ENCODE measurements at regions of chr10 and their contacts with region 1.

Region 1: DNA sequence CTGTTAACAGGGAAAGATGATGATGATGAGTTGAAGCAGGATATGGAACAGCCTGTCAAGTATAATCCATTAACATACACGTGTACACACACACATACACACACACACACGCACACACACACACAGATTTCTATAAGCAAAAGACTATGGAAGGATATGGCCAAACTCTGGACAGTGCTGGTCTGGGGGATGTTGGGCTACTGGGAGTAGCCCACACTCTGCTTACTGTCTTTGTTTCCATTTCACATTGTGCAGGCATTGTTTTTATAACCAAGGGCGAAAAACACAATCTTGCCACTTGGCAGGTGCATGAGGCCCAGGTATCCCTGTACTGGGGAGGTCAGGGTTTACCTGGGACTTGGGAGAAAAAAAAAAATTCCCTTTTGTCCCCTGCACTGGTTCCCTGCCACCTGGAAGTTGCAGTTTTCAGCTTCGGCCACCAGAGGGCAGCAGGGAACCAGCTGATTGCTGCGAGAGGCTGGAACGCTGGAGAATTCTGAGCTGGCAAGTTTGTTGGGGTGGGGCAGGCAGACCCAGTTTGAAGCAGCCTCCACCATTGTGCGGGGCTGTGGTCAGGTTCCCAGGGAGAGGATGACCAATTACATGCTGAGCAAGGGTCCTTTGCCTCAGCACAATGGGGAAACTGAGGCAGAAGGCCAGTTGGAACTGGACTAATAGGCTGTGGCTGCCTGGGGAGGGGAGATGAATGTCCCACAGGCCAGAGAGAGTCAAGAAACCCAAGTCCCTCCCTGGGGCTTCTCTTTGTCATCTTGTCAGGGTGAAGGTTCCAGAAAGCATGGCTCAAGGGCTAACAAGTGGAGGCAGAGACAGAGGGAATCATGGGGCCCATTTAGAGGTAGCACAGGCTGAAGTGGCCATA is 27.3 kb downstream of the PPIF start:
- DNase-seq: peak; percentile 66 to 89 (median 80)
- H3K4me3 ChIP-seq: no peak overlapping the region
- H3K27ac ChIP-seq: peak overlapping the region in 3 of 59 donors; percentile 0 to 44 (median 39)
- H3K27me3 ChIP-seq: no peaks in the 10 kb centered on the region
- CTCF ChIP-seq: peak; percentile 95 to 100 (median 99)

Region 2: DNA sequence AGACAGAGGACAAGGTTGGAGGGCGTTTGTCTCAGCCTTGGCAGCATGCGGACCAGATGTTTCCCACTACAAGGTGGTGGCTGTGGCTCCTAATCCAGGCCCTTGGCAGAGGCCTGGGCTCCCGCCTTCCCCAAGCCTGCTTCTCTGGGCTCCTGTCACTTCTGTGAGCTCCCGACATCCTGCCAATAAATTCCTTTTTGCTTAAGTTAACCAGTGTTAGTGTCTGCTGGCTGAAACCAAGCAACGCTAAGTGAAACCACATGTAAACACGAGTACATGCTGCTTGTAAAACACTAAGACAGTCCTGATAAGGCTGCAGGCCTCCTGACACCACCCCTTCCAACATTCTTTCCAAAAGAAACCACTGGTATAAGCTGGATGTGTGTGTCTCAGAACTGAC is 569.4 kb before region 1 on chr10:
- intact Hi-C with region 1: no loop called
- DNase-seq: no peak
- H3K4me3 ChIP-seq: no peak overlapping the region
- H3K27ac ChIP-seq: peak overlapping the region in 2 of 59 donors; percentile 1 to 17
- H3K27me3 ChIP-seq: no peaks in the 10 kb centered on the region
- CTCF ChIP-seq: no peak

Region 3: GRCh38 chr10:79221110-79222051 is 153.2 kb before region 1 on chr10:
- intact Hi-C with region 1: no loop called
- DNase-seq: peak; percentile 57 to 84 (median 76)
- H3K4me3 ChIP-seq: peak overlapping the region in 24 of 59 donors; percentile 3 to 44 (median 22)
- H3K27ac ChIP-seq: peak overlapping the region; percentile 1 to 91 (median 83)
- H3K27me3 ChIP-seq: no peaks in the 10 kb centered on the region
- CTCF ChIP-seq: peak in 32 of 56 donors; percentile 7 to 51 (median 32)

Region 4: GRCh38 chr10:79463578-79464496 is 89.3 kb after region 1 on chr10:
- intact Hi-C with region 1: loop called in 1 of 2 experiments (anchors 2 kb)
- DNase-seq: no peak
- H3K4me3 ChIP-seq: no peak overlapping the region
- H3K27ac ChIP-seq: no peak overlapping the region
- H3K27me3 ChIP-seq: no peaks in the 10 kb centered on the region
- CTCF ChIP-seq: no peak

Region 5: GRCh38 chr10:79487296-79488194 is 113.0 kb after region 1 on chr10:
- intact Hi-C with region 1: loop called in 1 of 2 experiments (anchors 5 kb)
- DNase-seq: peak in 3 of 10 donors; percentile 18 to 43 (median 38)
- H3K4me3 ChIP-seq: no peak overlapping the region
- H3K27ac ChIP-seq: peak overlapping the region in 3 of 59 donors; percentile 21 to 41 (median 25)
- H3K27me3 ChIP-seq: no peaks in the 10 kb centered on the region
- CTCF ChIP-seq: peak in 54 of 56 donors; percentile 19 to 69 (median 54)

Region 6: DNA sequence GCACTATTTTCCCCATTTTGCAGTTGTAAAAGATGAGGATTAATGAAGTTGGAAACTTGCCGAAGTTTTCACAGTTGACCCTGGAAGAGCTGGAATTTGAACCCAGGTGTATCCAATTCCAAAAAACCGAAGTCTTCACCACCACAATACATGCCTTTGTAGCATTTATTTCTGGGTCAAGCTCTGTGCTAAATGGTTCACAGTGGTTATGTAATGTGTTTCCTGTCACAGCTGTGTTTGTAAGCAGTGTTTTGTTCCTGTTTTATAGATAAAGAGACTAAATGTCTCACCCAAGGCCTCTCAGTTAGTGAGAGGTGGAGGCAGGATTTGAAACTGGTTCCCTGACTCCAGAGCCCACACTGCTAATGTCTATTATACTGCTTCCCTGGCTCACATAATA is 168.1 kb after region 1 on chr10:
- intact Hi-C with region 1: no loop called
- DNase-seq: no peak
- H3K4me3 ChIP-seq: no peak overlapping the region
- H3K27ac ChIP-seq: no peak overlapping the region
- H3K27me3 ChIP-seq: no peaks in the 10 kb centered on the region
- CTCF ChIP-seq: no peak

Region 7: GRCh38 chr10:79608505-79609375 is 234.2 kb after region 1 on chr10:
- intact Hi-C with region 1: loop called in 1 of 2 experiments (anchors 5 kb)
- DNase-seq: no peak
- H3K4me3 ChIP-seq: no peak overlapping the region
- H3K27ac ChIP-seq: no peak overlapping the region
- H3K27me3 ChIP-seq: peaks cover 0 to 2% (median 0%) of the 10 kb centered on the region in 45 donors
- CTCF ChIP-seq: peak in 54 of 56 donors; percentile 25 to 67 (median 49)

Region 8: GRCh38 chr10:79929409-79929904 is 554.9 kb after region 1 on chr10:
- intact Hi-C with region 1: loop called in 1 of 2 experiments (anchors 5 kb)
- DNase-seq: peak; percentile 68 to 83 (median 72)
- H3K4me3 ChIP-seq: peak overlapping the region in 1 of 59 donors; percentile 11
- H3K27ac ChIP-seq: no peak overlapping the region
- H3K27me3 ChIP-seq: peaks cover 0 to 13% (median 0%) of the 10 kb centered on the region in 45 donors
- CTCF ChIP-seq: peak; percentile 62 to 98 (median 93)